ENCODE measurements at regions of chr12 and their contacts with region 1.

Region 1: GRCh38 chr12:65999564-66000280 is 130.8 kb downstream of the LLPH start:
- DNase-seq: no peak
- H3K4me3 ChIP-seq: no peak overlapping the region
- CTCF ChIP-seq: no peak
- POLR2A ChIP-seq: no peak

Region 2: GRCh38 chr12:65602610-65603295 is 397.0 kb before region 1 on chr12:
- intact Hi-C with region 1: loop called (anchors 10 kb)
- DNase-seq: peak; percentile 76 to 92
- H3K4me3 ChIP-seq: no peak overlapping the region
- CTCF ChIP-seq: no peak
- POLR2A ChIP-seq: no peak

Region 3: DNA sequence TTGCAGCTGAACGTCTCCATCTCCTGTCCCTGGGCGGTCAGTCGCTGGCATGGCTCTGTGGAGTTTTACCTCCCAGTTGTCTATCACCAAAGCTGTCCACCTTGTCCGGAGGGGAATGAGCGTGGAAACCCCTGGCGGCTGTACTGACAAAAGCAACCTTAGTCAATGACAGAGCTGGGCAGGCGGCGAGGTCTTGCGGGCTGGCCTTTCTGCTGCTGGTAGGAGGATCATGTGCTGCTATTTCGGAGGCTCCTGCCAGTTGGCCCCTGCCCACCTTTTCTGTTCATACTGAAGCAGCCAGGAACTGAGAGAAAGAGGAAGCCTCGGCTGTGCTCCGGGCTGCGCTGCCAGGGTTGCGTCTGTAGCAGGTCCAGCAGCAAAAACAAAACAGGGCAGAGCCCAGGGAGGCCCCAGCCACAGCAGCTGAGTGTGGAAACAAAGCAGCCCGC is 117.7 kb before region 1 on chr12:
- intact Hi-C with region 1: no loop called
- DNase-seq: peak; percentile 89 to 97
- H3K4me3 ChIP-seq: peak overlapping the region; percentile 5
- CTCF ChIP-seq: no peak
- POLR2A ChIP-seq: no peak

Region 4: GRCh38 chr12:66087365-66087943 is 87.7 kb after region 1 on chr12:
- intact Hi-C with region 1: no loop called
- DNase-seq: peak; percentile 51 to 89
- H3K4me3 ChIP-seq: no peak overlapping the region
- CTCF ChIP-seq: peak in 1 of 3 donors; percentile 33
- POLR2A ChIP-seq: no peak

Measured in lower leg skin (tissue), 4 donors.